ENCODE measurements at regions of chr12 and their contacts with region 1.

Region 1: GRCh38 chr12:110555577-110556406 is 27.3 kb downstream of the PPTC7 start:
- DNase-seq: no peak
- ATAC-seq: no peak
- H3K4me3 ChIP-seq: no peak overlapping the region
- H3K27ac ChIP-seq: no peak overlapping the region
- H3K4me1 ChIP-seq: peaks cover 22% of the 10 kb centered on the region; the same call in 1 of the 2 replicates
- H3K27me3 ChIP-seq: no peaks in the 10 kb centered on the region
- CTCF ChIP-seq: no peak
- EP300 ChIP-seq: no peak
- POLR2A ChIP-seq: no peak
- RAD21 ChIP-seq: no peak

Region 2: DNA sequence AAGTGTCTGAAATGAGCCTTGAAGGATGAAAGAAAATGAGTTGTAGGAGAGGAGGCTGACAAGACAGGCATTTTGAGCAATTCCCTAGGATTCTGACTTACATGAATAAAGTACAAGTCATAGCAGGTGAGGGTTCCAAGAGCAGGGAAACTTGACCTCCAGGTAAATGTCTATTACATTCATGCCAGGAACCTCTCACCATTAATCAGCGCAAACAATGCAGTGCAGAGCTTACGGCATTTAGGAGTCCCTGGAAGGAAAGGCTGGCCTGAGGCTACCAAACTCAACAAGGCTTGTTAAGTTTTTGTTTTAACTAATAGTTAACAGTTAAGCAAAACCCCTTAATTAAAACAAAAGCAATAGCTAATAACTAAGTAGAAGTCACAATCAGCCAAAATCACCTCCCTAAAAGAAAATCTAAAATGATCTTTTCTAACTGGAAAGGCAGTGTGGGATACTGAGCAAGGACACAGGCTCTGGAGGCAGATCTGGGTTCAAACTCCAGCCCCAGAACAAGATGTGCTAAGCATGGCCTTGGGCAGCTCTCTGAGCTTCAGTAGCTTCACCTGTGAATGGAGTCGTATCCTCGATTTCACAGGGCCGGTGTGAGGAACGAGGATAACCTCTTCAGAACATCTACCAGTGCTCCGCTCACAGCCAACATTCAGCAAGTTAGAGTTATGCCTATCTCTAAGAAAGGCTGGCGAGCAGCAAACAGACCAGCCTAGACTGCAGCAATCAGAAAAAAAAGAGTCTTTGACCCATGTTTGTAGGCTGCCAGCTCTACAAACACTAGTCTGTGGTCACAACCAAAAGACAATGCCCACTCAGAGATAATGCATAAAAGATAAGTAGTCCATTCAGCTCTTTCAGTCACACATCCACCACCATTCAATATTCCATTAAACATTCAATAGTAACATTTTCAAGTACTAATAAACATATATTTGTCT is 10.4 kb after region 1 on chr12:
- CTCF ChIA-PET with region 1: interaction called, 3 read pairs
- POLR2A ChIA-PET with region 1: no interaction called
- in situ Hi-C with region 1: no loop called
- intact Hi-C with region 1: loop called (anchors 1 kb)
- DNase-seq: peak; percentile 78
- ATAC-seq: peak; percentile 94
- H3K4me3 ChIP-seq: peak overlapping the region; percentile 35 to 52 (median 36); a peak in 5 of 6 replicates
- H3K27ac ChIP-seq: peak overlapping the region; percentile 82
- H3K4me1 ChIP-seq: peaks cover 74% of the 10 kb centered on the region
- H3K27me3 ChIP-seq: no peaks in the 10 kb centered on the region
- CTCF ChIP-seq: no peak
- EP300 ChIP-seq: no peak; a peak in 2 of 4 replicates
- POLR2A ChIP-seq: no peak
- RAD21 ChIP-seq: no peak

Region 3: DNA sequence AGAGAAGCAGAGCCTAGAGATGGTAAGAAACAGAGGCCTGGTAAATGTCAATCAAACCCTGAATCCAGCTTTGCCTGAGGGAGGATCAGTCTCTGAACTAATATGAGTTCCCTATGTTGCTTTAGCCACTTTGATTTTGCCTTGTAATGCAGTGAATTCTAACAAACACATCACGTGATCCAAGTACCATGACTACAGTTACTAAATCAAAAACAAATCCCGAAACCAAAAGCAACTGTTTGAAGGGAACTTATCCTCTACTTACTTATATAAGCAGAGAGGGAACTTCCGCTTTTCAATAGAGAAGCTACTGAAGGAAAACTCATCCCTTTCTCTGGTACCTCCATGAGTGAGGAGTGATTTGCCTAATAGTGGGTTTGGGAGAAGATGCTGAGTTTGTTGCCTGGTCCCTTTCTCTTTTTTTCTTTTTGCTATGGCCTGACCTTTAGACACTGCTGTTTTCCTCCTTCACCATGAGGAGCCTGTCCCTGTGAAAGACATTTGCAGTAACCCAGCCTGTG is 35.1 kb after region 1 on chr12:
- CTCF ChIA-PET with region 1: no interaction called
- POLR2A ChIA-PET with region 1: no interaction called
- in situ Hi-C with region 1: loop called (anchors 5 kb)
- intact Hi-C with region 1: no loop called
- DNase-seq: peak; percentile 70
- ATAC-seq: peak; percentile 31; the same call in 2 of the 3 replicates
- H3K4me3 ChIP-seq: peak overlapping the region in 1 of 3 experiments; percentile 52; a peak in 1 of 6 replicates
- H3K27ac ChIP-seq: peak overlapping the region; percentile 80
- H3K4me1 ChIP-seq: peaks cover 36% of the 10 kb centered on the region
- H3K27me3 ChIP-seq: no peaks in the 10 kb centered on the region
- CTCF ChIP-seq: no peak
- EP300 ChIP-seq: no peak
- POLR2A ChIP-seq: no peak
- RAD21 ChIP-seq: no peak

Region 4: GRCh38 chr12:110600254-110600653 is 44.5 kb after region 1 on chr12:
- CTCF ChIA-PET with region 1: interaction called, 171 read pairs
- POLR2A ChIA-PET with region 1: interaction called, 3 read pairs
- in situ Hi-C with region 1: no loop called
- intact Hi-C with region 1: loop called (anchors 1 kb)
- DNase-seq: peak; percentile 70
- ATAC-seq: no peak; the same call in 2 of the 3 replicates
- H3K4me3 ChIP-seq: no peak overlapping the region
- H3K27ac ChIP-seq: no peak overlapping the region
- H3K4me1 ChIP-seq: peaks cover 15% of the 10 kb centered on the region
- H3K27me3 ChIP-seq: no peaks in the 10 kb centered on the region
- CTCF ChIP-seq: peak; percentile 74
- EP300 ChIP-seq: no peak
- POLR2A ChIP-seq: no peak
- RAD21 ChIP-seq: peak; percentile 86